Heart right ventricle (tissue), 16 donors: ENCODE measurements at regions of chr4 and their contacts with region 1.

Region 1: DNA sequence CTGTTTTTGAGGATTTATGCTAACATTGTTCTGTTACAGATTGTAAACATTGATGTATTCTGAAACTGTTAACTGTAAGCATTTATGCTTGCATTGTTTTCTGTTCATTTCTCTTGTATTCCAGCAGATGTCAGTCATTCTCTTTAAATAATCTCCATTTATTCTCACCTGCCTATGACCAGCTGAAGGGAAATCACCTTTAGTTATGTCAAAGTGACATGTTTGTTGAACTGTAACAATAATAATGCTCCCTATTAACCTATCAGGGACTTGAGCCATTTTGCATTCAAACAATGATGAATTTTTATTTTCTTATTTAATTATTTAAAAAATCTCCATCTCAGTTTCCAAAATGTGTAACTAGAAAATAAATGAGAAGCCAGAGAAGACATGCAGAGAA is 58.0 kb downstream of the SPCS3 start:
- DNase-seq: no peak
- ATAC-seq: peak in 2 of 8 donors; percentile 21 to 22
- H3K4me3 ChIP-seq: no peak overlapping the region
- H3K27ac ChIP-seq: no peak overlapping the region
- H3K4me1 ChIP-seq: peaks cover 0 to 1% (median 0%) of the 10 kb centered on the region in 9 donors
- H3K27me3 ChIP-seq: no peaks in the 10 kb centered on the region
- CTCF ChIP-seq: peak in 8 of 9 donors; percentile 29 to 72 (median 52)

Region 2: DNA sequence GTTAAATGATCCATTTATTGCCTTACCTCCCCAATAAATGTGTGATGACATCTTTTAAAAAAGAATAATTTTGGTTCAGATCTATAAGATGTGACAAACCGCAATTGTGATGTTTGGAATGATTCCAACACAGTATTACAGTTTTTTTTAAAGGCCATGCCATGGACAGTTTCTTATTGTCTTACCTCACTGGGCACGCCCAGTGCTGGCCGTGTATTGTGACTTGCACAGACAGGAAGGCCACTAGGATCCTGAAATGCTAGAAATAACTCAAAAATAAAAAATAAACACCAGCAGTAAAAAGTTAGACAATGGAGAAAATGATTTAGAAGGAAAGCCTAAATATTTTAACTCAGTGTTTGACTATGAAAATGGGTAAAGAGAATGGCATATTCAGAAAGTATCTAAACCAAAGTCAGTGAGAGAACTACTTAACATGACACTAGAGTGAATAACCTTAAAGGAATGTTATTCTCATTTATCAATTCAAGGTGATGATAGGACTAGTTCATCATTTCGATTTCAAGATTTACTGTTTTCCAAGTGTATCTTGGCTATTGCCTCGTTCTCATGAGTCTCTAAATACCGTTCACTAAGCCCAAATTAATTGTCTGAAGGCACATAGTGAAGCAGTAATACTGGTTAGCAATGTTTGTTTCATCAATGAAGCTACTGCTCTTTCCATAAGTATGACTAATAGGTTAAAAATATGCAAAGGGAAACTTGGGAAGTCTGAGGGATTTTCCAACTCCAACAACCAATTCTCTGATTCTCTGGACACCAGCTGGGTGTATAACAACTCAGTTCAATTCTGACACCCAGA is 461.0 kb after region 1 on chr4:
- intact Hi-C with region 1: loop called in 1 of 10 experiments (anchors 5 kb)
- DNase-seq: peak; percentile 9 to 14
- ATAC-seq: peak in 5 of 8 donors; percentile 59 to 80 (median 73)
- H3K4me3 ChIP-seq: no peak overlapping the region
- H3K27ac ChIP-seq: peak overlapping the region in 7 of 10 donors; percentile 6 to 64 (median 35)
- H3K4me1 ChIP-seq: peaks cover 0 to 28% (median 0%) of the 10 kb centered on the region in 9 donors
- H3K27me3 ChIP-seq: no peaks in the 10 kb centered on the region
- CTCF ChIP-seq: no peak